K562 (cell line): ENCODE measurements at regions of chr1 and their contacts with region 1.

Region 1: DNA sequence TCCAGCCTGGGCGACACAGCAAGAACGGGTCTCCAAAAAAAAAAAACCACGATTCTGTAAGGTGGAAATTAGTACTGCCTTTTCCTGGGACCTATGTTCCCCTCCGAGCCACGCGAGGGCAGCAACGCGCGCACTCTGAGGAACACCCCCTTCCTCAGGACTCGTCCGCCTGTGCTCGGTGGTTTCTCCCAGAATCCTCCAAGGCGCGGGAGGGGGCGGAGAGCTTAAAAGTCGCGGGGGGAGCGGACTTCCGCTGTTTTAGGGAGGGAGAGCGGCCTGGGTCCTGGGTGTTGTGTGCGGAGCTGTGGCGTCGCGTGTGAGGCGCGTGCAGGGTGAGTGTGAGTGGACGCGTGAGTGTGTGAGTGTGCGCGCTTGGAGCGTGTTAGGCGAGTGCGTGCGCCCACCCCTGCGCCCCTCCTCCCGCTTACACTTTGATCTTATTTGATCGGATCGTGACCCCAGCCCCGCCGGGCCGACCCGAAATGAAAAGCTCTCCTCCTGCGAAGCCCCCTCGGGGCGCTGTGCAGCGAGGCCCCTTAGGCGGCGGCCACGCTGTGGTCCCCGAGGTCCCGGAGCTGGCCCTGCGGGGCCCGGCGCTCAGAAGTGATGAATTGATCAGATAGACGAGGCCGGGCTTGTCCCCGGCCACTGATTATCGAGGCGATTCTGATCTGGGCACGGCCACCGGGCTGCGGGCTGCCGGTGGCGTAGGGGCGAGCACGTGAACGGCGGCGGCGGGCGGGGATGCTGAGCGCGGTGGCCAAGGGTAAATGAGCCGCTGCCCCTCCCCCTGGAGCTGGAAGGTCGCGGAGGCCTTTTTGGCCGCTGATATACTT is 9.6 kb downstream of the TMEM167B start:
- DNase-seq: peak; percentile 97 to 100 (median 98)
- ATAC-seq: peak; percentile 95
- H3K4me3 ChIP-seq: peak overlapping the region; percentile 81
- H3K27ac ChIP-seq: peak overlapping the region; percentile 95
- H3K4me1 ChIP-seq: peaks cover 19 to 21% of the 10 kb centered on the region in 2 experiments
- H3K27me3 ChIP-seq: no peaks in the 10 kb centered on the region
- CTCF ChIP-seq: peak; percentile 91 to 96 (median 96)
- EP300 ChIP-seq: peak; percentile 78
- POLR2A ChIP-seq: peak; percentile 100
- RAD21 ChIP-seq: peak; percentile 50 to 55

Region 2: GRCh38 chr1:108746372-108747205 is 353.6 kb before region 1 on chr1 and contains the start of gene STXBP3:
- CTCF ChIA-PET with region 1: no interaction called
- POLR2A ChIA-PET with region 1: no interaction called
- in situ Hi-C with region 1: no loop called
- intact Hi-C with region 1: loop called (anchors 10 kb)
- DNase-seq: peak; percentile 99
- ATAC-seq: peak; percentile 94
- H3K4me3 ChIP-seq: peak within 1 kb of the TSS; percentile 81
- H3K27ac ChIP-seq: peak within 1 kb of the TSS; percentile 90
- H3K4me1 ChIP-seq: peaks cover 4 to 9% of the 10 kb centered on the region in 2 experiments; a peak in 4 of 5 replicates
- H3K27me3 ChIP-seq: no peaks in the 10 kb centered on the region
- CTCF ChIP-seq: peak; percentile 83 to 98 (median 94)
- EP300 ChIP-seq: peak; percentile 51
- POLR2A ChIP-seq: peak; percentile 99
- RAD21 ChIP-seq: peak; percentile 23 to 52
- polyA plus RNA-seq, gene STXBP3: 34.2 to 34.9 TPM

Region 3: GRCh38 chr1:109027841-109028240 is 72.3 kb before region 1 on chr1:
- CTCF ChIA-PET with region 1: no interaction called
- POLR2A ChIA-PET with region 1: interaction called, 5 read pairs
- in situ Hi-C with region 1: no loop called
- intact Hi-C with region 1: loop called (anchors 5 kb)
- DNase-seq: no peak
- ATAC-seq: peak; percentile 20; the same call in 1 of the 3 replicates
- H3K4me3 ChIP-seq: no peak overlapping the region
- H3K27ac ChIP-seq: no peak overlapping the region
- H3K4me1 ChIP-seq: no peaks in the 10 kb centered on the region; a peak in 1 of 5 replicates
- H3K27me3 ChIP-seq: no peaks in the 10 kb centered on the region
- CTCF ChIP-seq: peak in 1 of 3 experiments; percentile 39; a peak in 3 of 6 replicates
- EP300 ChIP-seq: no peak
- POLR2A ChIP-seq: no peak
- RAD21 ChIP-seq: no peak

Region 4: GRCh38 chr1:109075531-109076490 is 24.3 kb before region 1 on chr1 and contains the start of gene TAF13:
- CTCF ChIA-PET with region 1: interaction called, 4 read pairs
- POLR2A ChIA-PET with region 1: interaction called, 3 read pairs
- in situ Hi-C with region 1: no loop called
- intact Hi-C with region 1: loop called (anchors 1 kb)
- DNase-seq: peak; percentile 95 to 98 (median 96)
- ATAC-seq: peak; percentile 99
- H3K4me3 ChIP-seq: peak within 1 kb of the TSS; percentile 79
- H3K27ac ChIP-seq: peak within 1 kb of the TSS; percentile 89
- H3K4me1 ChIP-seq: peaks cover 18 to 20% of the 10 kb centered on the region in 2 experiments; a peak in 4 of 5 replicates
- H3K27me3 ChIP-seq: no peaks in the 10 kb centered on the region
- CTCF ChIP-seq: peak; percentile 17 to 30 (median 29); a peak in 3 of 6 replicates
- EP300 ChIP-seq: no peak
- POLR2A ChIP-seq: peak; percentile 98
- RAD21 ChIP-seq: 0 out of 4 replicates have a peak, but pooled peaks of 1 of the 2 experiments have one; percentile 13
- polyA plus RNA-seq, gene TAF13: 14.9 to 21.0 TPM

Region 5: GRCh38 chr1:109083923-109084322 is 16.2 kb before region 1 on chr1:
- CTCF ChIA-PET with region 1: no interaction called
- POLR2A ChIA-PET with region 1: interaction called, 90 read pairs
- in situ Hi-C with region 1: no loop called
- intact Hi-C with region 1: no loop called
- DNase-seq: peak in 1 of 4 experiments; percentile 49
- ATAC-seq: peak; percentile 18
- H3K4me3 ChIP-seq: no peak overlapping the region
- H3K27ac ChIP-seq: peak overlapping the region; percentile 28; the same call in 1 of the 3 replicates
- H3K4me1 ChIP-seq: peaks cover 18 to 38% of the 10 kb centered on the region in 2 experiments
- H3K27me3 ChIP-seq: no peaks in the 10 kb centered on the region
- CTCF ChIP-seq: no peak
- EP300 ChIP-seq: no peak
- POLR2A ChIP-seq: no peak
- RAD21 ChIP-seq: no peak

Region 6: GRCh38 chr1:109133815-109134214 is 33.7 kb after region 1 on chr1:
- CTCF ChIA-PET with region 1: no interaction called
- POLR2A ChIA-PET with region 1: interaction called, 18 read pairs
- in situ Hi-C with region 1: no loop called
- intact Hi-C with region 1: no loop called
- DNase-seq: no peak
- ATAC-seq: no peak
- H3K4me3 ChIP-seq: no peak overlapping the region
- H3K27ac ChIP-seq: no peak overlapping the region
- H3K4me1 ChIP-seq: peaks cover 27 to 32% of the 10 kb centered on the region in 2 experiments; a peak in 3 of 5 replicates
- H3K27me3 ChIP-seq: no peaks in the 10 kb centered on the region
- CTCF ChIP-seq: no peak
- EP300 ChIP-seq: no peak
- POLR2A ChIP-seq: no peak
- RAD21 ChIP-seq: no peak